CD8-positive, alpha-beta memory T cell (primary cell): ENCODE measurements at regions of chr16 and their contacts with region 1.

Region 1: GRCh38 chr16:30183233-30184095 is at the start of gene CORO1A:
- DNase-seq: peak; percentile 75 to 88 (median 80)
- H3K4me3 ChIP-seq: peak within 1 kb of the TSS; percentile 99
- H3K4me3 Mint-ChIP-seq: peak within 1 kb of the TSS; percentile 94 to 100 (median 98)
- H3K27ac ChIP-seq: peak within 1 kb of the TSS; percentile 71
- H3K27ac Mint-ChIP-seq: peak within 1 kb of the TSS; percentile 92 to 100 (median 96)
- H3K4me1 ChIP-seq: peaks cover 33% of the 10 kb centered on the region
- H3K4me1 Mint-ChIP-seq: peaks cover 25 to 43% (median 34%) of the 10 kb centered on the region in 3 donors
- H3K27me3 ChIP-seq: no peaks in the 10 kb centered on the region
- H3K27me3 Mint-ChIP-seq: peaks cover 0 to 14% of the 10 kb centered on the region in 2 donors
- total RNA-seq, gene CORO1A: 889 to 952 TPM

Region 2: DNA sequence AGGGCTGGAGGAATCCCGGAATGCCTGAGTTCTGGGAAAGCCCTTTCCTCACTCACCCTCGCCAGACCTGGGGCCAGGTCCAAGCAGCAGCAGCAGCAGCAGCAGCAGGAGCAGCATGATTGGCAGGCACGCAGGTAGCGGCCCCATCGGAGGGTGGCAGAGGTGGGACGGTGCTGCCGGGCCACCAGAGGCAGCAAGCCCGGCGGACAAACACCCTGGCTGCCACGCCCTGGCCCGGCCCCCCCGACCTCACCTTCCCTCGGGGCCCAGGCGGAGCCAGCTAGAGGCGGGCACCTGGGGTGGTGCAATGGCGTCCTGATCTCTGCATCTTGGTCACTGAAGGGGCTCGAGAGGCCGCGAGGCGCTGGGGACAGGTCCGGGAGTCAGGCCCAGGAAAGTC is 1076.2 kb before region 1 on chr16:
- CTCF ChIA-PET with region 1: no interaction called
- POLR2A ChIA-PET with region 1: no interaction called
- DNase-seq: no peak
- H3K4me3 ChIP-seq: no peak overlapping the region
- H3K4me3 Mint-ChIP-seq: no peak overlapping the region
- H3K27ac ChIP-seq: no peak overlapping the region
- H3K27ac Mint-ChIP-seq: no peak overlapping the region
- H3K4me1 ChIP-seq: peaks cover 5% of the 10 kb centered on the region
- H3K4me1 Mint-ChIP-seq: peaks cover 15 to 21% (median 19%) of the 10 kb centered on the region in 3 donors
- H3K27me3 ChIP-seq: no peaks in the 10 kb centered on the region
- H3K27me3 Mint-ChIP-seq: no peaks in the 10 kb centered on the region

Region 3: GRCh38 chr16:30142672-30143346 is 40.7 kb before region 1 on chr16:
- CTCF ChIA-PET with region 1: interaction called, 22 read pairs
- POLR2A ChIA-PET with region 1: interaction called, 10 read pairs
- DNase-seq: peak in 3 of 5 donors; percentile 38 to 54 (median 45)
- H3K4me3 ChIP-seq: no peak overlapping the region
- H3K4me3 Mint-ChIP-seq: no peak overlapping the region
- H3K27ac ChIP-seq: no peak overlapping the region
- H3K27ac Mint-ChIP-seq: peak overlapping the region; percentile 8 to 77 (median 35)
- H3K4me1 ChIP-seq: peaks cover 20% of the 10 kb centered on the region
- H3K4me1 Mint-ChIP-seq: peaks cover 15 to 21% (median 19%) of the 10 kb centered on the region in 3 donors
- H3K27me3 ChIP-seq: no peaks in the 10 kb centered on the region
- H3K27me3 Mint-ChIP-seq: no peaks in the 10 kb centered on the region